CD8-positive, alpha-beta T cell (primary cell): ENCODE measurements at regions of chr5 and their contacts with region 1.

Region 1: GRCh38 chr5:131357739-131358561 is 94.1 kb downstream of the CDC42SE2 start:
- DNase-seq: peak in 2 of 9 experiments; percentile 46 to 65
- ATAC-seq: peak; percentile 46
- H3K4me3 ChIP-seq: no peak overlapping the region
- H3K4me3 Mint-ChIP-seq: peak overlapping the region; percentile 33
- H3K27ac ChIP-seq: peak overlapping the region; percentile 1 to 63
- H3K27ac Mint-ChIP-seq: peak overlapping the region; percentile 86
- H3K4me1 ChIP-seq: peaks cover 57% of the 10 kb centered on the region
- H3K4me1 Mint-ChIP-seq: peaks cover 75% of the 10 kb centered on the region
- H3K27me3 ChIP-seq: no peaks in the 10 kb centered on the region
- H3K27me3 Mint-ChIP-seq: no peaks in the 10 kb centered on the region
- CTCF ChIP-seq: no peak

Region 2: DNA sequence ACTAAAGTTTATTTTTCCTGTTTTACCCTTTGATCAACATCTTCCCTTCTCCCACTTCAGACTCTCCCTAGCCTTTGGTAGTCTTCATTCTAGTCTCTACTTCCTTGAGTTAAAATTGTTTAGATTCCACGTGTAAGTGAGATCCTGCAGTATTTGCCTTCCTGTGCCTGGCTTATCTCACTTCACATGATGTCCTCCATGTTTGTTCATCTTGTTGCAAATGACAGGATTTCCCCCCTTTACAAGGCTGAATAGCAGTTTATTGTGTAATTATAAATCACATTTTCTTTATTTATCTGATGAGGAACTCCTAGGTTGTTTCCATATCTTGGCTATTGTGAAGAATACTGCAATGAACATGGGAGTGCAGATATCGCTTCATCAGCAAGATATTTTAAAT is 992.0 kb before region 1 on chr5:
- CTCF ChIA-PET with region 1: no interaction called
- POLR2A ChIA-PET with region 1: no interaction called
- intact Hi-C with region 1: no loop called
- DNase-seq: no peak
- ATAC-seq: no peak
- H3K4me3 ChIP-seq: no peak overlapping the region
- H3K4me3 Mint-ChIP-seq: no peak overlapping the region
- H3K27ac ChIP-seq: no peak overlapping the region
- H3K27ac Mint-ChIP-seq: no peak overlapping the region
- H3K4me1 ChIP-seq: no peaks in the 10 kb centered on the region
- H3K4me1 Mint-ChIP-seq: no peaks in the 10 kb centered on the region
- H3K27me3 ChIP-seq: no peaks in the 10 kb centered on the region
- H3K27me3 Mint-ChIP-seq: no peaks in the 10 kb centered on the region
- CTCF ChIP-seq: no peak

Region 3: DNA sequence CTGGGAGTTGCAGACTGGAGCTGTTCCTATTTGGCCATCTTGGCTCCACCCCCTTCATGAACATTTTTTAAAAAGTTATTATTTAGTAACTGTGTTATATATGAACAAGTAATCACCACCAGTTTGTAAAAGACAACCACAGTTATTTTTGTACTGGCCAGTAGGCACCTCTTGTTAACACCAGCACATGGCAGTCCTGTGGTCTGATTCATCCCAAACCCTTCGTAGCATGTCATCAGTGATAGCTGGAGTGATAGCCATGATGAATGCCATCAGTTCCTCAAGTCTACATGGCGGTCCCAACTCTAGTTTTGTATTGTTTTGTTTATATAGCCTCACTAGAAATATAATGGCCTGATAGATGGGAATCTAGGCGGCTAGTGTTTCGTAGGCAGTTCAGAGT is 19.9 kb before region 1 on chr5:
- CTCF ChIA-PET with region 1: no interaction called
- POLR2A ChIA-PET with region 1: interaction called, 3 read pairs
- intact Hi-C with region 1: loop called in 1 of 2 experiments (anchors 2 kb)
- DNase-seq: no peak
- ATAC-seq: peak; percentile 15
- H3K4me3 ChIP-seq: no peak overlapping the region
- H3K4me3 Mint-ChIP-seq: no peak overlapping the region
- H3K27ac ChIP-seq: peak overlapping the region in 1 of 2 experiments; percentile 82
- H3K27ac Mint-ChIP-seq: peak overlapping the region; percentile 72
- H3K4me1 ChIP-seq: peaks cover 44% of the 10 kb centered on the region
- H3K4me1 Mint-ChIP-seq: peaks cover 82% of the 10 kb centered on the region
- H3K27me3 ChIP-seq: no peaks in the 10 kb centered on the region
- H3K27me3 Mint-ChIP-seq: no peaks in the 10 kb centered on the region
- CTCF ChIP-seq: no peak

Region 4: GRCh38 chr5:131375351-131375750 is 17.4 kb after region 1 on chr5:
- CTCF ChIA-PET with region 1: interaction called, 8 read pairs
- POLR2A ChIA-PET with region 1: interaction called, 8 read pairs
- intact Hi-C with region 1: loop called (anchors 2 kb)
- DNase-seq: peak in 3 of 9 experiments; percentile 34 to 71 (median 51)
- ATAC-seq: no peak
- H3K4me3 ChIP-seq: no peak overlapping the region
- H3K4me3 Mint-ChIP-seq: peak overlapping the region; percentile 27
- H3K27ac ChIP-seq: peak overlapping the region; percentile 8 to 99
- H3K27ac Mint-ChIP-seq: peak overlapping the region; percentile 89
- H3K4me1 ChIP-seq: peaks cover 89% of the 10 kb centered on the region
- H3K4me1 Mint-ChIP-seq: peaks cover 89% of the 10 kb centered on the region
- H3K27me3 ChIP-seq: no peaks in the 10 kb centered on the region
- H3K27me3 Mint-ChIP-seq: no peaks in the 10 kb centered on the region
- CTCF ChIP-seq: no peak

Region 5: DNA sequence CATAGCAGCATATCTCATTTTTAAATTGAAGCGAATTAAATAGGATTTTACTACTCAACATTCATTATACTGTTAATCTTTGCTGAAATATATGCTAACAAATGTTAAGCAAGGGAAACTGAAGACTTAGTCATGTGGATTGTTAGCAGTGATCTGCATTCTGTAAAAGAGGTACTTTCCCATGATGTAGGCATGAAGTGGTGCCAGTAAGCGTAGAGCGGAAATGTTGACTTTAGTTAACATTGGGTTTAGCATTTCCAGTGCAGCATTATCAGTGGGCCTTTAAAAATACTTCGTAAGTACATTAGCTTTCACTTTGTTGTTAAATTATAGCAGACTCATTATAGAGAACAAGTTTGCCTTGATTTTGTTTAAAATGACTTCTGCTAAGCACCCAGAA is 36.2 kb after region 1 on chr5:
- CTCF ChIA-PET with region 1: no interaction called
- POLR2A ChIA-PET with region 1: no interaction called
- intact Hi-C with region 1: loop called in 1 of 2 experiments (anchors 5 kb)
- DNase-seq: peak in 6 of 9 experiments; percentile 24 to 92 (median 47)
- ATAC-seq: peak; percentile 87
- H3K4me3 ChIP-seq: no peak overlapping the region
- H3K4me3 Mint-ChIP-seq: peak overlapping the region; percentile 52
- H3K27ac ChIP-seq: peak overlapping the region; percentile 50 to 85
- H3K27ac Mint-ChIP-seq: peak overlapping the region; percentile 89
- H3K4me1 ChIP-seq: peaks cover 66% of the 10 kb centered on the region
- H3K4me1 Mint-ChIP-seq: peaks cover 86% of the 10 kb centered on the region
- H3K27me3 ChIP-seq: no peaks in the 10 kb centered on the region
- H3K27me3 Mint-ChIP-seq: no peaks in the 10 kb centered on the region
- CTCF ChIP-seq: no peak

Region 6: DNA sequence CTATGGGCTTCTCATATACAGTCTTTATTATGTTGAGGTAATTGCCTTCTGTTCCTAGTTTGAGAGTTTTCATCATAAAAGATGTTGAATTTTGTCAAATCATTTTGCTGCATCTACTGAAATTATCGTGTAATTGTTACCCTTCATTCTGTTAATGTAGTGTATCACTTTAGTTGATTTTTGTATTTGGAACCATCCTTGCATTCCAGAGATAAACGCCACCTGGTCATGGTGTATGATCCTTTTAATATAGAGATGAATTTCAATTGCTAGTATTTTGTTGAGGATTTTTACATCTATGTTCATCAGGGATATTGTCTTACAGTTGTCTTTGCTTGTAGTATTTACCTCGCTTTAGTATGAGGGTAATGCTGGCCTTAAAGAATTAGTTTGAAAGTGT is 568.2 kb after region 1 on chr5:
- CTCF ChIA-PET with region 1: no interaction called
- POLR2A ChIA-PET with region 1: no interaction called
- intact Hi-C with region 1: no loop called
- DNase-seq: no peak
- ATAC-seq: no peak
- H3K4me3 ChIP-seq: no peak overlapping the region
- H3K4me3 Mint-ChIP-seq: no peak overlapping the region
- H3K27ac ChIP-seq: no peak overlapping the region
- H3K27ac Mint-ChIP-seq: no peak overlapping the region
- H3K4me1 ChIP-seq: no peaks in the 10 kb centered on the region
- H3K4me1 Mint-ChIP-seq: no peaks in the 10 kb centered on the region
- H3K27me3 ChIP-seq: no peaks in the 10 kb centered on the region
- H3K27me3 Mint-ChIP-seq: no peaks in the 10 kb centered on the region
- CTCF ChIP-seq: no peak